H1 (cell line): ENCODE measurements at regions of chr2 and their contacts with region 1.

Region 1: DNA sequence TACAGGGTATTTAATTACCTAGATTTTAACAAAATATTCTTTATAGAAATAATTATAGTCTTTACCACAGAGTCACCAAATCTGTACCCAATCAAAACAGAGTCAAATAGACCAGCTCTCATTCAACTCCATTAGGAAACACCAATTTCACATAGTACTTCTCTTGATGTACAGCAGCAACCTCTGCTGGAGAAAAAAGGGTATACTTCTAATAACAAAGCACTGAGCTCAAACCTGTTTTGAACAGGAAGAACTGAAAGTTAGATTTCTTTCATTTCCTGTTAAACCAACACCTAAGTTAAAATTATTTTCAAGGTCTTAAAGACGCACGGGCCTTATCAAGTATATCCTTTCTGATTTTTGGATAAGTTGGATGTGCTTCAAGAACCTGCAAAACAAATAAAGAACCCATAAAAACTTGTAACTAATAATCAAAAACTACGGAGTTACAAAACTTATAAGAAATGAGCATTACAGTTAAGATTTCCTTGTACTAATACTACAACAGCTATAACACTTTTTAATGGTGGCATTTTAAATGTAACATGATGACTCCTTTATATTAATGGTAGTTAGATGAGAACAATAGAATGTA is 79.0 kb downstream of the TTC21B start:
- DNase-seq: no peak
- H3K4me3 ChIP-seq: no peak overlapping the region
- H3K27ac ChIP-seq: no peak overlapping the region
- H3K4me1 ChIP-seq: no peaks in the 10 kb centered on the region
- H3K27me3 ChIP-seq: peaks cover 0 to 1% (median 0%) of the 10 kb centered on the region in 4 experiments; a peak in 1 of 7 replicates
- CTCF ChIP-seq: peak in 2 of 3 experiments; percentile 53 to 69; a peak in 2 of 4 replicates
- EP300 ChIP-seq: no peak
- POLR2A ChIP-seq: no peak
- RAD21 ChIP-seq: peak; percentile 93 to 94

Region 2: DNA sequence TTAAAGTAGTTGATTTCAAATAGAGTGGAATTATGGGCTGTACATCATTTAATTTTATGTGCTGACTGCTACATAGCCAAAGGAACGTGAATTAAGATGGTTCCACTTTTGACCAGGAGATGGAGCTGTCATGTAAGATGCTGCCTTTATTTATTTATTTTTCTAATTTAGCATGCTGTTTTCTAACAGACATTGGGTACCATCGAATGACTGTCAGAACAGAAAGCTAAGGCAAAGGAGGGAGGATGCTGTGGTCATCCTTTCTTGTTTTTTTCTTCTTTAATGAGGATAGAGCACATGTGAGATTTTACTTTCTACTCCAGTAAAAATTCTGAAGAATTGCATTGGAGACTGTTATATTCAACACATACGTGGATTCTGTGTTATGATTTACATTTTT is 635.3 kb before region 1 on chr2 and contains the start of gene SCN2A:
- CTCF ChIA-PET with region 1: interaction called, 12 read pairs
- POLR2A ChIA-PET with region 1: no interaction called
- DNase-seq: no peak
- H3K4me3 ChIP-seq: no peak within 1 kb of the TSS
- H3K27ac ChIP-seq: no peak within 1 kb of the TSS
- H3K4me1 ChIP-seq: no peaks in the 10 kb centered on the region
- H3K27me3 ChIP-seq: no peaks in the 10 kb centered on the region
- CTCF ChIP-seq: peak in 2 of 3 experiments; percentile 61 to 63; a peak in 3 of 4 replicates
- EP300 ChIP-seq: no peak
- POLR2A ChIP-seq: no peak
- RAD21 ChIP-seq: peak; percentile 80
- total RNA-seq, gene SCN2A: 0.61 and 1.1 TPM in 2 replicates

Region 3: GRCh38 chr2:165691615-165692014 is 182.9 kb before region 1 on chr2:
- CTCF ChIA-PET with region 1: interaction called, 27 read pairs
- POLR2A ChIA-PET with region 1: no interaction called
- DNase-seq: peak in 1 of 2 experiments; percentile 59
- H3K4me3 ChIP-seq: no peak overlapping the region
- H3K27ac ChIP-seq: no peak overlapping the region
- H3K4me1 ChIP-seq: no peaks in the 10 kb centered on the region
- H3K27me3 ChIP-seq: no peaks in the 10 kb centered on the region
- CTCF ChIP-seq: peak; percentile 41 to 58 (median 47)
- EP300 ChIP-seq: no peak
- POLR2A ChIP-seq: no peak
- RAD21 ChIP-seq: peak; percentile 81 to 84

Region 4: GRCh38 chr2:165778653-165779451 is 95.7 kb before region 1 on chr2:
- CTCF ChIA-PET with region 1: interaction called, 37 read pairs
- POLR2A ChIA-PET with region 1: no interaction called
- DNase-seq: no peak
- H3K4me3 ChIP-seq: no peak overlapping the region
- H3K27ac ChIP-seq: no peak overlapping the region
- H3K4me1 ChIP-seq: peaks cover 0 to 6% (median 5%) of the 10 kb centered on the region in 4 experiments; a peak in 5 of 7 replicates
- H3K27me3 ChIP-seq: no peaks in the 10 kb centered on the region
- CTCF ChIP-seq: peak; percentile 18 to 72 (median 68)
- EP300 ChIP-seq: no peak
- POLR2A ChIP-seq: no peak
- RAD21 ChIP-seq: peak; percentile 84 to 87

Region 5: DNA sequence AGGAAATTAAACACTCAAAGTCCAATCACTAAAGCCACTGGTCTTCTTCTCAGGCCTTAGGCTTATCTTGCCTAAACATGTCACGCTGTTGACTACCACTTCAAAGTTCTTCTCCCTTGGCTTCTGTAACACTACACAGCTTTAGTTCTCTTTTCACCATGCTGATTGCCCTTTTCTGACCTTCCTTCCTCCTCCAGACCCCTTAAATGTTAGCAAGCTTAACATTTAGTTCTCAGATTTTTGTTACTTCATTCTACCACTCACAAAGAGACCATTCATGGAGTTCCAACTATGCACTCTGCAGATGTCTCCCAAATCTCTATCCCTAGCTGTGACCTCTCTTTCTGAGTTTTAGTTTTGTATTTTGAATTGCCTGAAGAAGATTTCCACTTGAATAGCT is 14.6 kb after region 1 on chr2:
- CTCF ChIA-PET with region 1: interaction called, 10 read pairs
- POLR2A ChIA-PET with region 1: no interaction called
- DNase-seq: no peak
- H3K4me3 ChIP-seq: no peak overlapping the region
- H3K27ac ChIP-seq: no peak overlapping the region
- H3K4me1 ChIP-seq: no peaks in the 10 kb centered on the region
- H3K27me3 ChIP-seq: no peaks in the 10 kb centered on the region
- CTCF ChIP-seq: no peak
- EP300 ChIP-seq: no peak
- POLR2A ChIP-seq: no peak
- RAD21 ChIP-seq: no peak

Region 6: GRCh38 chr2:165953655-165954606 is 79.4 kb after region 1 on chr2 and contains the start of gene TTC21B:
- CTCF ChIA-PET with region 1: no interaction called
- POLR2A ChIA-PET with region 1: no interaction called
- DNase-seq: peak; percentile 80 to 94
- H3K4me3 ChIP-seq: peak within 1 kb of the TSS; percentile 69 to 87 (median 74)
- H3K27ac ChIP-seq: peak within 1 kb of the TSS; percentile 90
- H3K4me1 ChIP-seq: peaks cover 0 to 2% (median 0%) of the 10 kb centered on the region in 4 experiments; a peak in 2 of 7 replicates
- H3K27me3 ChIP-seq: no peaks in the 10 kb centered on the region
- CTCF ChIP-seq: peak; percentile 53 to 85 (median 72)
- EP300 ChIP-seq: peak in 1 of 2 experiments; percentile 10; a peak in 1 of 3 replicates
- POLR2A ChIP-seq: peak in 1 of 2 experiments; percentile 66; a peak in 2 of 3 replicates
- RAD21 ChIP-seq: peak; percentile 57
- total RNA-seq, gene TTC21B: 20.8 and 23.9 TPM in 2 replicates

Region 7: GRCh38 chr2:166042768-166043390 is 168.3 kb after region 1 on chr2:
- CTCF ChIA-PET with region 1: no interaction called
- POLR2A ChIA-PET with region 1: no interaction called
- DNase-seq: no peak
- H3K4me3 ChIP-seq: no peak overlapping the region
- H3K27ac ChIP-seq: no peak overlapping the region
- H3K4me1 ChIP-seq: no peaks in the 10 kb centered on the region; a peak in 2 of 7 replicates
- H3K27me3 ChIP-seq: no peaks in the 10 kb centered on the region
- CTCF ChIP-seq: no peak
- EP300 ChIP-seq: no peak
- POLR2A ChIP-seq: no peak
- RAD21 ChIP-seq: no peak